ENCODE measurements at regions of chr19 and their contacts with region 1.

Region 1: DNA sequence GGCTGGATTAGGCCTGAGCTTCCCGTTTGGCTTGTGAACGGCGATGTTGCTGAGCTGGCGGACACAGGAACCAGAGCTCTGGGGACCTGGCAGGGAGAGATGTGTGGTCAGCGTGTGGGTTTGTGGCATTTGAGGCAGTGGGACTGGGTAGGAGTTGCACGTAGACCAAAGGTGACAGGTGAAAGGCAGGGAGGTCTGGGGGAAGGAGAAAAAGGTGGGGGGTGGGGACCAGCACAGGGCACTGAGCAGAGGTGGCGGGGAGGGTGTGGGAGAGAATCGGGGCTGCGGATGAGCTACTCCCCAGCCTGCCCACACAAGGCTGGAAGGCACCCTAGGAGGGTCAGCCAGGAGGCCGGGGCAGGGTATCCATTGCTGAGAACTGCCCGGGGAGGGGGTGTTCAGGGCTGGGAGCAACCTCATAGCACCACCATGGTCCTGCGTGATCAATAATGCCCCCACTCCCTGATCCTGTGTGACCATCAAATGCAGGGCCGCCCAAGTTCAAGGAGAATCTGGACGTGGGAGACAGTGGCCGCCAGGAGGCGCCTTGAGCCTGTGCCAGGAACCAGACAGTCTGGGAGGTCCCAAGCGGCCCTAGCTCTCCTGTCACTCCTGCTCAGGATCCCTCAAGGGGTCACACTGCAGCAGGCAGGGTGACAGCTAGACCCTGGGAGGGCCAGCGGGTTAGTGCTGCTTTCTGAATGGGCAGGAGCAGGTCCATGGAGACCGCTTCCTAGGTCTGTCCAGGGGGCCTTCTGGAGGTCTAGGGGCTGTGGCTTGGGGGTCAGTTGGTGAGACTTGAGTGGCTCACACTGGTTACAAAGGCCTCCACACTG is 12.8 kb upstream of the SELENOW start:
- DNase-seq: peak; percentile 72
- H3K4me3 ChIP-seq: no peak overlapping the region
- H3K27ac ChIP-seq: no peak overlapping the region
- H3K4me1 ChIP-seq: no peaks in the 10 kb centered on the region
- H3K27me3 ChIP-seq: no peaks in the 10 kb centered on the region
- CTCF ChIP-seq: peak; percentile 72 to 84 (median 78)
- EP300 ChIP-seq: no peak
- POLR2A ChIP-seq: no peak

Region 2: DNA sequence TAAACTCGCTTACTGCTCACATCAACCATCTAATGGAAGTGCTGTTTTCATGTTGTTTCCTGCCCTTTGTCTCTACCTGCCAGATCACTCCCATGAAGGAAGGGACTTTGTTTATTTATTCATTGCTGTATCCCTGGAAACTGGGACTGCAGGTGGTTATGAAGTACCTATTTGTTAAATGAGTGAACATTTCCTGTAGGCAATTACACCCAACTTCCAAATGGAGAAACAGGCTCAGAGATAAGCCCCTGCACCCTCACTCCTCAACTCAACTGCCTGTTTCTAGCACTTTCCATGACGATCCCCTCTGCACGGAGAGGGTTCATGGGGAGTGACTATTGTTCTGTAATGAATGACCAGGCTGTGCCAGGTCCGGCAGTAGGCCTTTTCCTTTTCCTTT is 10.8 kb after region 1 on chr19:
- in situ Hi-C with region 1: no loop called
- intact Hi-C with region 1: loop called (anchors 1 kb)
- DNase-seq: no peak
- H3K4me3 ChIP-seq: no peak overlapping the region
- H3K27ac ChIP-seq: peak overlapping the region; percentile 95 to 99 (median 96)
- H3K4me1 ChIP-seq: peaks cover 14 to 44% (median 35%) of the 10 kb centered on the region in 4 donors
- H3K27me3 ChIP-seq: no peaks in the 10 kb centered on the region
- CTCF ChIP-seq: no peak
- EP300 ChIP-seq: peak; percentile 59
- POLR2A ChIP-seq: peak; percentile 32

Region 3: DNA sequence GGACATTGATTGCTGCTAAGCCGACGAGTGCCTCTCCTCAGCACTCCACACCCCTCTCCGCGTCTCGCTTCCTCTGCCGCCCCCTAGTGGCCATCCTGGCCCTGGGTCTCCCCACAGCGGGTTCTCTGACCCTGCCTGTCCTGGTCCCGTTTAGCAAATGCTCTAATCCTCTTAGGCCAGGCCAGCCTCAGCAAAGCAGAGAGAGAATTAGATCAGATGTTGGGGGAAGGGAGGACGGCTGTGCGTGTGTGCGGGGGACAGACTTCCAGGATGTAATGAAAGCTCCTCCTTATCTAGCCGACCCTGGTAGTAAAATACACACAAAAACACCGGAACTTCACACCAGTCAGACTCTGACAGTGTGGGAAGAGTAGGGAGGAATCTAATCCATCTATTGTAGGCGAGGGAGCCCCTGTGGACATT is 97.8 kb after region 1 on chr19:
- in situ Hi-C with region 1: no loop called
- intact Hi-C with region 1: loop called (anchors 10 kb)
- DNase-seq: peak; percentile 84
- H3K4me3 ChIP-seq: no peak overlapping the region
- H3K27ac ChIP-seq: no peak overlapping the region
- H3K4me1 ChIP-seq: no peaks in the 10 kb centered on the region
- H3K27me3 ChIP-seq: no peaks in the 10 kb centered on the region
- CTCF ChIP-seq: peak; percentile 70 to 96 (median 94)
- EP300 ChIP-seq: no peak
- POLR2A ChIP-seq: no peak

Measured in transverse colon (tissue), 4 donors.